Lower leg skin (tissue), 4 donors: ENCODE measurements at regions of chr10 and their contacts with region 1.

Region 1: DNA sequence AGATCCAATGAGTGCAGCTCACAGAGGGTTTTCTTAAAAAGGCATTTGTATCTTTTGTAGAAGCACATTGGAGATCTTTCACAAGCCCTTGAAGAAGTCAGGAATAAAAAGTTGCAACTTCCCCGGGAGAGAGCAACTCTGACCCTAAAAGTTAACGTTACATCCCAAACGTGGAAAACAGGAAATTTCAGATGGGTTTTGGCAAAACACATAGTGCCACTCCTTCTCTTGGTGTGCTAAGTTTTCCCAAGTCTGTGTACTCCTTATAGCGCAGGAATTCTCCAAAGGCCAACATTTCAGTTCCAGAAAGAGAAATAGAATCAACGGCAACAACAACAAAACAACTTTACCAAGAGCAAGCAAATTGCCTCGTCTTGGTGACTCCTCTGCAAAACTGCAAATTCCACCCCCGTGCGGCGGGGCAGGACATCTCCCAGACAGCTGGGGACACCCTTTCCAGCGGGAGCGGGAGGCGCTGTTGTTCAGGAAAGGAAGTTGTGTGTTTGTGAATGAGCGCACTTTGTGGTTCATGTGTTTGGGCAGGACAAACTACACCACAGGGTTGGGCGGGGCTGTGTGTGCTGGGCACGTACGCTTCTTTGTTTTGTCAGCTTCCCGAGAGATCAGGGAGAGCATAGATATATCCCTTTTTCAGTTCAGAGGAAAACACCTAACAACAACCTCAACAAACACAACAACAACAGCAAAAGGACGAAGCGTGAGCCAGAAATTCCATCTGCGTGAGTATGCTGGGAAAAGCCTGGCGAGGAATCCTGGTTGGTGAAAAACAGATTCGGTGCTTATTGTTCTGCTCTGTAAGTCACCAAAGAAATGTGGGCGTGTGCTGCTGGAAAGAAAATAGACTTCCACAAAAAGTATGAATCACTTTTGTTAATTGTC is 294.7 kb upstream of the PITRM1 start:
- DNase-seq: peak; percentile 93 to 97
- H3K4me3 ChIP-seq: no peak overlapping the region
- CTCF ChIP-seq: no peak
- POLR2A ChIP-seq: no peak

Region 2: DNA sequence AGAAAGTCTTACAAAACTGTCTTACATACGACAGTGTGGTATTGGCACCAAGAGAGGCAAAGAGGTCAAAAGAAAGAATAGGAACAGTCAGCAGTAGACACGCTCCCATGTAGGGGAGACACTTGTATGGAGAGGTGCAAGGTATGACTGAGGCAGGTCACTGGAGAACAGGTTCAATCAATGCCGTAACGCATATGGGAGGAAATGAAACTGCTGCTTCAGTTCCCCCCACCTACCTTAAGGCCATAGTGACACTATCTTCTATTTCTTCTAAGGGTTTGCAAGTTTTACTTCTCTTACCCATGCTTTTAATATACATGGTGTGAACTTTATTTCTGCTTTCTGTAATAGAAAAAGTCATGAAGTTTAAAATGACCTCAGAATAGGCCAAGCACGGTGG is 289.3 kb before region 1 on chr10:
- intact Hi-C with region 1: no loop called
- DNase-seq: no peak
- H3K4me3 ChIP-seq: no peak overlapping the region
- CTCF ChIP-seq: no peak
- POLR2A ChIP-seq: no peak

Region 3: DNA sequence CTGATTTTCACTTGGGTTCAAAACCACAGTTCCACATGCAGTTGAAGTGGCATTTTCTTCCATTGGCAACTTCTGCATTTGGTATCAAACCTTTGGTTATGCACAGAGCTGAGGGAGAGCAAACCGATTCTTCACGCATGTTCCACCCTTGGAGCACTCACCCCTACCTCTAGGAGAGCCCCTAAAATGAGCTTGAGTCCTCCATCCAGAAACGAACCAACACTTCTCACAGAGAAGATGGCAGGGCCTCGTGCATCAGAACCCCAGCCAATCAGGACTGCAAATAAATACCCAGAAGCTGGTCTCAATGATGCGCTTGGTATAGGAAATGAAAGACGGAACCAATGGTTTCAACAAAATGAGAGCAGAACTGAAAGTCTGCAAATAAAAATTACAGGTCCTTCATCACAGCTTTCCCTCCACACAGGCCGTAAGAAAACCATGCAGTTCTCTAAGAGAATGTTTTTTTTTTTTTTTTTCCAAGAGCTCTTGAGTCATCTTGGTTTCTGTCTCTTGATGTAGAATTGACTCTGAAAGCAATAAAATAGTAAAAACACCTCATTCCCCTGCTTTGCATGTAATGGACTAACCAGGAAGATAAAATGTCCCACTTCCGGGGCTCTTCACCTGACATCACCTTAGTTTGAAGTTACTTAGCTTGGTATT is 293.9 kb after region 1 on chr10:
- intact Hi-C with region 1: loop called (anchors 10 kb)
- DNase-seq: peak in 1 of 2 donors; percentile 32
- H3K4me3 ChIP-seq: no peak overlapping the region
- CTCF ChIP-seq: no peak
- POLR2A ChIP-seq: no peak